SK-N-SH (cell line): ENCODE measurements at regions of chr6 and their contacts with region 1.

Region 1: GRCh38 chr6:73329201-73329600 is 24.9 kb downstream of the DPPA5 start:
- DNase-seq: no peak
- H3K4me3 ChIP-seq: no peak overlapping the region
- H3K27ac ChIP-seq: no peak overlapping the region
- H3K4me1 ChIP-seq: no peaks in the 10 kb centered on the region
- H3K27me3 ChIP-seq: no peaks in the 10 kb centered on the region; the same call in 1 of the 2 replicates
- CTCF ChIP-seq: no peak
- EP300 ChIP-seq: no peak
- RAD21 ChIP-seq: no peak

Region 2: GRCh38 chr6:73236147-73236750 is 93.0 kb before region 1 on chr6:
- CTCF ChIA-PET with region 1: no interaction called
- POLR2A ChIA-PET with region 1: no interaction called
- DNase-seq: no peak
- H3K4me3 ChIP-seq: no peak overlapping the region
- H3K27ac ChIP-seq: peak overlapping the region in 1 of 2 experiments; percentile 30; a peak in 1 of 4 replicates
- H3K4me1 ChIP-seq: peaks cover 0 to 16% of the 10 kb centered on the region in 2 experiments; a peak in 1 of 4 replicates
- H3K27me3 ChIP-seq: no peaks in the 10 kb centered on the region
- CTCF ChIP-seq: no peak
- EP300 ChIP-seq: peak in 1 of 2 experiments; percentile 52; a peak in 1 of 4 replicates
- RAD21 ChIP-seq: no peak

Region 3: GRCh38 chr6:73285674-73286283 is 43.4 kb before region 1 on chr6:
- CTCF ChIA-PET with region 1: interaction called, 48 read pairs
- POLR2A ChIA-PET with region 1: no interaction called
- DNase-seq: peak; percentile 47
- H3K4me3 ChIP-seq: no peak overlapping the region
- H3K27ac ChIP-seq: no peak overlapping the region
- H3K4me1 ChIP-seq: no peaks in the 10 kb centered on the region
- H3K27me3 ChIP-seq: no peaks in the 10 kb centered on the region
- CTCF ChIP-seq: peak; percentile 72
- EP300 ChIP-seq: no peak
- RAD21 ChIP-seq: peak; percentile 54

Region 4: DNA sequence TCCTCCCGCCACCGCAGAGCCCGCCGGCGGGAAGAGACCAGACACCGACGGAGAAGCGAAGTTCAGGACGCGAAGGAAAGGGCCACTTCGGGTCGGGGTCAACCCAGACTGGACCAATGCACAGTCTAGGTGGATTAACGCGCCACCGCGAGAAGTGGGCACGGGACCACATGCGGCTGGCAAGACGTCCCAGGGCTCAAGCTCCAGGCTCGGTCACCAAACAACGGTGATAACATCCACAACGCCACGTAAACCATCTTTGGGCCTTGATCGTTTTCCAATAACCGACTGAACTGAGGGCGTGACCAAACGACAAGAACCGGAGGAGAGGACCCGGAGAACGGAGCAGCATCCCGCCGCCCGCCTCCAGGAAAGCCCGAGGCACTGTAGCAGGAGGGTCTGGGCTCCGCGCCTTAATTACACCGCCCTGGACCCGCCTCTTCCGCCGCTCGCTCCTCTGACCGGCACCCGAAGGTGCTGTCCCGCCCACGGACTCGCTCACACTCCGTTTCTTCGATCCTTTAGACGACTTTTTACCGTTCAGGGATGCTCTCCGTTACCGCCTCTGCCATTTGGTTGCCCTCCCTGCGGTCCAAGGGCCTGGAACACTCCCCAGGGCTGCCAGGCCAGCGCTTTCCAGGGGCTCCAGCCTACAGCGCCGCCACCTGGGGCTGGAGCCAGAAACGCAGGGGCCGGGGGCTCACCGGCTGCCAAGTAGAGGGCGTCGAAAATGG is 19.3 kb before region 1 on chr6:
- CTCF ChIA-PET with region 1: interaction called, 12 read pairs
- POLR2A ChIA-PET with region 1: no interaction called
- DNase-seq: peak; percentile 80
- H3K4me3 ChIP-seq: peak overlapping the region; percentile 51 to 65
- H3K27ac ChIP-seq: peak overlapping the region in 1 of 2 experiments; percentile 28; a peak in 1 of 4 replicates
- H3K4me1 ChIP-seq: no peaks in the 10 kb centered on the region; a peak in 1 of 4 replicates
- H3K27me3 ChIP-seq: no peaks in the 10 kb centered on the region
- CTCF ChIP-seq: peak; percentile 64
- EP300 ChIP-seq: no peak
- RAD21 ChIP-seq: no peak; the same call in 1 of the 2 replicates

Region 5: GRCh38 chr6:73339347-73339746 is 10.1 kb after region 1 on chr6:
- CTCF ChIA-PET with region 1: interaction called, 13 read pairs
- POLR2A ChIA-PET with region 1: no interaction called
- DNase-seq: no peak
- H3K4me3 ChIP-seq: no peak overlapping the region
- H3K27ac ChIP-seq: no peak overlapping the region
- H3K4me1 ChIP-seq: no peaks in the 10 kb centered on the region
- H3K27me3 ChIP-seq: no peaks in the 10 kb centered on the region
- CTCF ChIP-seq: no peak
- EP300 ChIP-seq: no peak
- RAD21 ChIP-seq: no peak